ENCODE measurements at regions of chr10 and their contacts with region 1.

Region 1: DNA sequence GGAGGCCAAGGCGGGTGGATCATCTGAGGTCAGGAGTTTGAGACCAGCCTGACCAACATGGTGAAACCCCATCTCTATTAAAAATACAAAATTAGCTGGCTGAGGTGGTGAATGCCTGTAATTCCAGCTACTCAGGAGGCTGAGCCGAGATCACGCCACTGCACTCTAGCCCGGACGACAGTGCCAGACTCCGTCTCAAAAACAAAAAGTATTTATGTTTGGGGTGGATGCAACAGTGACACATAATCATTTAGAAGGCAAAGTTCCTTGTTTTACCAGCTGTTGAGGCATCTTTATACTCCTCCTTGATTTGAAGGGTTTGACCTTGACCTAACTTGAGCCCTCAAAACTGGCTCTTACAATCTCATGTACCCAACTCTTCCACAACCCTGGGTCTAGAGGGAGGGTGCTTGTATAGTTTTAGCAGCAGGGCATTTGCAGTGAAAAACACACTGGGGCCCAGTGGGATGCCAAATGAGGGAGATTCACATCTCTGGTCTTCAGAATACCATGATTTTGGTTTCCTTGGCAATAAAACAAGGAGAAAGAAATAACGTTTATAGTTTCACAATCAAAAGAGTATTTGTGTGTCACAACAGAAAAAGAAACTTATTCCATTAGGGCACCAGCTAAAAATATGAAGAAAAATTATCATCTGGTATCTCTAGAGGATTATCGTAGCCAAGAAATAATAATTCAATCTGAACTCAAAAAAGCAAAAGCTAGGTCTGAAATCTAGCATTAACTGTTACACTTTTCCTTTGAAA is 14.2 kb upstream of the TMEM254 start:
- DNase-seq: no peak
- H3K4me3 ChIP-seq: no peak overlapping the region
- H3K27ac ChIP-seq: peak overlapping the region in 1 of 2 donors; percentile 68
- H3K4me1 ChIP-seq: peaks cover 13% of the 10 kb centered on the region
- H3K27me3 ChIP-seq: no peaks in the 10 kb centered on the region
- CTCF ChIP-seq: no peak
- POLR2A ChIP-seq: no peak

Region 2: DNA sequence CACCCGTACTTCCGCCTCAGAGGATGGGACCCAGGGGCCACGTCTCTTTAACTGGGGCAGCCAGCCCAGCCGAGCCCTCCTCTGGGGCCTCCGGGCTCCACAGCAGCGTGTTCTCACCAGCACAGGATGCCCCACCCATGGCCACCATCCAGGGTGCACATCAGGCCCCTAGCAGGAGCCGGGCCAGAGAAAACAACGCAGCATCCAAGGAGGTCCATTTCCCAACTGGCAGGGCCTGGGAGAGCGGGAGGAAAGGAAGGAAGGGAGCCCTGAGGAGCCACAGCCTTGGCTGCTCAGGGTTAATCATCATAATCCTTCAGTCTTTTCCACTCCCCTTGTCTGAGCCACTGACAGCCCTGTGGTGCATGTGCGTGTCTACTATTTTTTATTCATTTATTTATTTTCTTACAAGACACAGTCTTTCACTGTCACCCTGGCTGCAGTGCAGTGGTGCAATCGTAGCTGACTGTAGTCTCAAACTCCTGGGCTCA is 71.8 kb after region 1 on chr10:
- intact Hi-C with region 1: loop called (anchors 10 kb)
- DNase-seq: peak; percentile 75
- H3K4me3 ChIP-seq: no peak overlapping the region
- H3K27ac ChIP-seq: peak overlapping the region in 1 of 2 donors; percentile 85
- H3K4me1 ChIP-seq: peaks cover 20% of the 10 kb centered on the region
- H3K27me3 ChIP-seq: no peaks in the 10 kb centered on the region
- CTCF ChIP-seq: no peak
- POLR2A ChIP-seq: no peak

Measured in testis (tissue), 5 donors.